ENCODE measurements at regions of chr5 and their contacts with region 1.

Region 1: GRCh38 chr5:135213466-135214239 is 179.6 kb upstream of the PITX1 start:
- DNase-seq: no peak
- ATAC-seq: no peak
- H3K4me3 ChIP-seq: no peak overlapping the region
- H3K27ac ChIP-seq: no peak overlapping the region
- H3K4me1 ChIP-seq: no peaks in the 10 kb centered on the region
- H3K27me3 ChIP-seq: peaks cover 2 to 6% of the 10 kb centered on the region in 2 experiments; a peak in 3 of 4 replicates
- CTCF ChIP-seq: no peak
- EP300 ChIP-seq: no peak
- POLR2A ChIP-seq: no peak
- RAD21 ChIP-seq: no peak

Region 2: DNA sequence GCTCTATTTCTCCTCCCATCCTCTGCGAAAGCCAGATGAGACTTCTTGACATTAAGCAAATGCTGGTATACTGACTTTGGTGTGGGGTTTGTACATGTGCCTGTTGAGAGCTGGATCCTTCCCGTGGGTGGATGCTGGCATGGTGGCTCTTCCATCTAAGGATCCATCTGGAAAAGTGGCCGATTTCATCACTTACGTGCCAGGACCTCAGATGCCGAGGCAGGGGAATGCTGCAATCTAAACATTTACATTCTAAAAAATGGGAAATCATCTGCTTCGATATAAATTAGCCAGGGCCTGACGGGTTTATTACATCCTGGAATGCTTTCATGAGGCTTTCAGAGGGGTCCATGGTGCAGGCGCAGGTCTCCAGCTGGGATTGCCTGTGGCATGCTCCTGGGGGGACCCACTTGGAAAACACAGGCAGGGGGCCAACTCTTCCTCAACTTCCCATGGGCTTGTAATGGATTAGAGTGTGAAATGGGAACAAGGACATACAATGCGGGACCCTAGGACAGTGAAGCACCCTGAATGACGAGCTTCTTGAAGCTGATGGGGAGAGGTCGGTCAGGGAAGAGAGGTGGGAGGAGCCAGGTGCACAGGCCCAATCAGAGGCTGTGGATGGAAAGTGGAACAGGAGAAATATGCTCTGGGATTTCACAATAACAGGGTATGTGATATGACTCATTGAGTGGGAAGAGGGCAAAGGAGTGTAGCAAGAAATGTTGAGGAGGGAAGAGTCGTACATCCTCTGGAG is 74.1 kb before region 1 on chr5:
- CTCF ChIA-PET with region 1: no interaction called
- POLR2A ChIA-PET with region 1: no interaction called
- RAD21 ChIA-PET with region 1: no interaction called
- SMC1A ChIA-PET with region 1: no interaction called
- in situ Hi-C with region 1: no loop called
- intact Hi-C with region 1: no loop called
- DNase-seq: no peak
- ATAC-seq: no peak
- H3K4me3 ChIP-seq: no peak overlapping the region
- H3K27ac ChIP-seq: no peak overlapping the region
- H3K4me1 ChIP-seq: no peaks in the 10 kb centered on the region
- H3K27me3 ChIP-seq: peaks cover 0 to 1% of the 10 kb centered on the region in 2 experiments; a peak in 1 of 4 replicates
- CTCF ChIP-seq: no peak
- EP300 ChIP-seq: no peak
- POLR2A ChIP-seq: no peak
- RAD21 ChIP-seq: no peak

Region 3: DNA sequence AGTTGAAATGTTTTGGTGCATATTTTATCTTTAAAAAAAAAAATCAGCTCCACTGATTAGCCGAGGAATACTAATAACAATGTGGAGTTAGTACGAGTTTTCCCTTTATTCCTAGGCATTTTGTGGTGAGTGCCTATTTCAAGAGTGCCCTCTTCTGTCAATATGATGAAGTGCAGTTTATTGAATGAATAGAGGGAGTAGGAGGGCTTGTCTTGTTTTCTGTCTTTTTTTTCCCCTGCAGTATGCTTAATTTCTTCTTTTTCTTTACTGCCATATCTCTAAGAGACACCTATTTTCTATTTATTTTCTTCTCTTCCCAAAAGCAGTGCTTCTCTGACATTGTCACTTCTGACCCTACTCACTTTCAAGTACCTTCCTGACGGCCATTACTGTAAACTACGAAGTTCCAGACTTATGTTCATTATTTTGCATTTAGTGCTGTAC is 10.0 kb before region 1 on chr5:
- CTCF ChIA-PET with region 1: interaction called, 11 read pairs
- POLR2A ChIA-PET with region 1: no interaction called
- RAD21 ChIA-PET with region 1: no interaction called
- SMC1A ChIA-PET with region 1: no interaction called
- in situ Hi-C with region 1: no loop called
- intact Hi-C with region 1: no loop called
- DNase-seq: no peak
- ATAC-seq: no peak
- H3K4me3 ChIP-seq: no peak overlapping the region
- H3K27ac ChIP-seq: no peak overlapping the region
- H3K4me1 ChIP-seq: no peaks in the 10 kb centered on the region
- H3K27me3 ChIP-seq: peaks cover 0 to 5% of the 10 kb centered on the region in 2 experiments; a peak in 1 of 4 replicates
- CTCF ChIP-seq: peak; percentile 34 to 45 (median 40); a peak in 4 of 6 replicates
- EP300 ChIP-seq: no peak
- POLR2A ChIP-seq: no peak
- RAD21 ChIP-seq: peak; percentile 38; the same call in 1 of the 2 replicates

Region 4: DNA sequence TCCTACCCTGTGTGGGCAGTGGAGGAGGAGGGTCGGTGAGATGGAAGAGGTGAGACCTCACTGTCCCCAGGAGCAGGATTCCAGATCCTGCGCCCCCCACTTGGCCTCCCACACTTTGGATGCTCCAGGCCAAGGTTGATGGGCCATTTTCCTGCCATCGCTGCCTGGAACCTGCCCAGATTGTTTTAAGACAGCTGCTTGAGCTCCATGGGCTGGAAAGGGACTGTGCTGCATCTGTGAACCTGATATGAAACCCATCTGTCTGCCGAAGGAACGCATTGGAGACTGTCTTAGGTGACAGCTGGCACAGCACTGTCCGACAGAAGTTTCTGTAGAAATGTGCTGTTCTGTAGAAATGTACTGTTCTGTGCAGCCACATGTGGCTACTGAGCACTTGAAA is 548.1 kb after region 1 on chr5:
- CTCF ChIA-PET with region 1: no interaction called
- POLR2A ChIA-PET with region 1: no interaction called
- RAD21 ChIA-PET with region 1: no interaction called
- SMC1A ChIA-PET with region 1: no interaction called
- in situ Hi-C with region 1: no loop called
- intact Hi-C with region 1: no loop called
- DNase-seq: no peak
- ATAC-seq: no peak
- H3K4me3 ChIP-seq: no peak overlapping the region
- H3K27ac ChIP-seq: no peak overlapping the region
- H3K4me1 ChIP-seq: no peaks in the 10 kb centered on the region
- H3K27me3 ChIP-seq: no peaks in the 10 kb centered on the region
- CTCF ChIP-seq: no peak
- EP300 ChIP-seq: no peak
- POLR2A ChIP-seq: no peak
- RAD21 ChIP-seq: no peak

Measured in GM12878 (cell line).